SK-N-SH (cell line): ENCODE measurements at regions of chr1 and their contacts with region 1.

Region 1: GRCh38 chr1:116737020-116737854 is 17.0 kb upstream of the CD2 start:
- DNase-seq: peak; percentile 83
- H3K4me3 ChIP-seq: no peak overlapping the region
- H3K27ac ChIP-seq: no peak overlapping the region
- H3K4me1 ChIP-seq: peaks cover 0 to 10% of the 10 kb centered on the region in 2 experiments; a peak in 2 of 4 replicates
- H3K27me3 ChIP-seq: no peaks in the 10 kb centered on the region
- CTCF ChIP-seq: peak; percentile 78
- EP300 ChIP-seq: no peak
- RAD21 ChIP-seq: peak; percentile 94

Region 2: GRCh38 chr1:116525440-116525839 is 211.8 kb before region 1 on chr1:
- CTCF ChIA-PET with region 1: no interaction called
- POLR2A ChIA-PET with region 1: no interaction called
- DNase-seq: no peak
- H3K4me3 ChIP-seq: no peak overlapping the region
- H3K27ac ChIP-seq: no peak overlapping the region
- H3K4me1 ChIP-seq: no peaks in the 10 kb centered on the region
- H3K27me3 ChIP-seq: no peaks in the 10 kb centered on the region
- CTCF ChIP-seq: no peak
- EP300 ChIP-seq: no peak
- RAD21 ChIP-seq: no peak

Region 3: GRCh38 chr1:116564426-116564825 is 172.8 kb before region 1 on chr1:
- CTCF ChIA-PET with region 1: no interaction called
- POLR2A ChIA-PET with region 1: no interaction called
- DNase-seq: no peak
- H3K4me3 ChIP-seq: no peak overlapping the region
- H3K27ac ChIP-seq: no peak overlapping the region
- H3K4me1 ChIP-seq: peaks cover 3 to 4% of the 10 kb centered on the region in 2 experiments; a peak in 1 of 4 replicates
- H3K27me3 ChIP-seq: no peaks in the 10 kb centered on the region
- CTCF ChIP-seq: no peak
- EP300 ChIP-seq: no peak
- RAD21 ChIP-seq: no peak

Region 4: DNA sequence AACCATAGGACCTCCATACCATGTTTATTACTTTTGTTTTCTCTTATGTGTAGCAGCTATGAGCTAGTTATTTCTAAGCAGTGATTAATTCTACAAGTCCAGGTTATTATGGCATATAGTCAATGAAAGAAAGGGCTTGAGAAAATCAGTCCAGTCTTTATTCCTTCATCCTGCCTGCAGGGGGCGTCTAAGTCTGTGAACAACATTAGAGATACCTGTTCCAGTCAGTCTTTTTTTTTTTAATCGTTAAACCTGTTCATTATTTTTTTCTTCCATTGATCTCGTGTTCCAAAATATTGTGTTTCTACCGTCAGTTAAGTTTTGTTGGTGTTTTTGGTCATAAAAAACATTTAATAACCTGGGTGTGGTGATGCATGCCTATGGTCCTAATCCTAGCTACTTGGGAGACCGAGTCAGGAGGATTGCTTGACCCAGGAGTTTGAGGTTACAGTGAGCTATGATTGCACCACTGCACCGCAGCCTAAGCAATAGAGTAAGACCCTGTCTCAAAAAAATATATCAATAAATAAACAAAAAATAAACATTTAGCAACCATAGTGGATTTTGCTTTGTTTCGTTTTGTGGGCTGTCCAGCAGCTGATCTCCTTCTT is 12.4 kb before region 1 on chr1:
- CTCF ChIA-PET with region 1: interaction called, 28 read pairs
- POLR2A ChIA-PET with region 1: no interaction called
- DNase-seq: peak; percentile 42
- H3K4me3 ChIP-seq: no peak overlapping the region; a peak in 1 of 4 replicates
- H3K27ac ChIP-seq: no peak overlapping the region
- H3K4me1 ChIP-seq: peaks cover 0 to 6% of the 10 kb centered on the region in 2 experiments; a peak in 2 of 4 replicates
- H3K27me3 ChIP-seq: no peaks in the 10 kb centered on the region; the same call in 1 of the 2 replicates
- CTCF ChIP-seq: peak; percentile 90
- EP300 ChIP-seq: no peak
- RAD21 ChIP-seq: peak; percentile 64

Region 5: DNA sequence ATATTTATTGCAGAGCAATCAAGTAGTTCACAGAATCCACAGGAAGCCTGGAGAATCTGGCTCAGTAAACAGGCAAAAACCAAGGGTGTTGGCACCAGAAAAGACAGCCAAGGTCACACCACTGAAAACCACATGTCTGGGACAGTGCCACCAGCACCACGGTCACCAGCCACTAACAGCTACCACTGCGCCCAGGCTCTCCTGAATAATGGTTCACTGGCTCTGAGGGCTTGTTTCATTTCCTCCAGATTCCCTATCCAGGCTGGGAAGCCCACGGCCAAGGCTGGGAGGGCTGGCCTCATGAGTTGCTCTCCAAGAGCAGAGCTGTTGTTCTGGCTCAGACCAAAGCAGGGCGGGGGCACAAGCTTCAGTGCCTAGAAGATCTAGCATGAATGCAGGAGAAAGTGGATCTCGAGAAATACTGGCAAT is 118.0 kb after region 1 on chr1:
- CTCF ChIA-PET with region 1: interaction called, 10 read pairs
- POLR2A ChIA-PET with region 1: no interaction called
- DNase-seq: peak; percentile 37
- H3K4me3 ChIP-seq: no peak overlapping the region
- H3K27ac ChIP-seq: peak overlapping the region in 1 of 2 experiments; percentile 87; a peak in 2 of 4 replicates
- H3K4me1 ChIP-seq: peaks cover 28 to 36% of the 10 kb centered on the region in 2 experiments
- H3K27me3 ChIP-seq: no peaks in the 10 kb centered on the region
- CTCF ChIP-seq: no peak
- EP300 ChIP-seq: no peak
- RAD21 ChIP-seq: no peak

Region 6: DNA sequence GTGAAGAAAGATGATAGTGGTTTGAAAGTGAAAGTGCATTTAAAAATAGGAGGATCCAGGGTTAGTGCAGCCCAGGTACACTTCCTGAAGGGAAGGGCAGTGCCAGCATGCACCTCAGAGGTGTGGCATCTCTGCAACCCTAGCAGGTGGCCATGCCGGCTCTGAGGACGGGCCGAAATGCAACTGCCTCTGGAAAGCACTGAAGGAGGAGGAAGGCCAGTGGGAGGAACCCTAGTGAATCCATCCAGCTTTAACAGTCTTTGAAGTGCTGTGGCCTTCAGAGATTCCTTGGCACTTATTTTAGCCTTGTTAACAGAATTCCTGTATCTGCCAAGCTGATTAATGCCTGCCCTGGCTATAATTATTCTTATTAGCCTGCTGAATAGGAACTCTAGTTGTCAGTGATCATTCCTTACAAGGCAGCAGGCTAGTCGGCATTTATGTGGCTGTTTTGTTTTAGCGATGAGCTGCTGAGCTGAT is 178.0 kb after region 1 on chr1:
- CTCF ChIA-PET with region 1: interaction called, 11 read pairs
- POLR2A ChIA-PET with region 1: no interaction called
- DNase-seq: no peak
- H3K4me3 ChIP-seq: no peak overlapping the region
- H3K27ac ChIP-seq: peak overlapping the region in 1 of 2 experiments; percentile 19; a peak in 1 of 4 replicates
- H3K4me1 ChIP-seq: peaks cover 0 to 61% of the 10 kb centered on the region in 2 experiments; a peak in 2 of 4 replicates
- H3K27me3 ChIP-seq: no peaks in the 10 kb centered on the region
- CTCF ChIP-seq: no peak
- EP300 ChIP-seq: no peak
- RAD21 ChIP-seq: no peak

Region 7: GRCh38 chr1:117059678-117060440 is 322.6 kb after region 1 on chr1 and contains the start of gene TTF2:
- CTCF ChIA-PET with region 1: interaction called, 42 read pairs
- POLR2A ChIA-PET with region 1: interaction called, 4 read pairs
- DNase-seq: peak; percentile 96
- H3K4me3 ChIP-seq: peak within 1 kb of the TSS; percentile 76 to 91
- H3K27ac ChIP-seq: peak within 1 kb of the TSS; percentile 53 to 83; a peak in 3 of 4 replicates
- H3K4me1 ChIP-seq: peaks cover 7 to 13% of the 10 kb centered on the region in 2 experiments; a peak in 3 of 4 replicates
- H3K27me3 ChIP-seq: no peaks in the 10 kb centered on the region
- CTCF ChIP-seq: no peak
- EP300 ChIP-seq: no peak
- RAD21 ChIP-seq: no peak
- polyA plus RNA-seq, gene TTF2: 10.8 and 12.2 TPM in 2 replicates